ENCODE measurements at regions of chr2 and their contacts with region 1.

Region 1: DNA sequence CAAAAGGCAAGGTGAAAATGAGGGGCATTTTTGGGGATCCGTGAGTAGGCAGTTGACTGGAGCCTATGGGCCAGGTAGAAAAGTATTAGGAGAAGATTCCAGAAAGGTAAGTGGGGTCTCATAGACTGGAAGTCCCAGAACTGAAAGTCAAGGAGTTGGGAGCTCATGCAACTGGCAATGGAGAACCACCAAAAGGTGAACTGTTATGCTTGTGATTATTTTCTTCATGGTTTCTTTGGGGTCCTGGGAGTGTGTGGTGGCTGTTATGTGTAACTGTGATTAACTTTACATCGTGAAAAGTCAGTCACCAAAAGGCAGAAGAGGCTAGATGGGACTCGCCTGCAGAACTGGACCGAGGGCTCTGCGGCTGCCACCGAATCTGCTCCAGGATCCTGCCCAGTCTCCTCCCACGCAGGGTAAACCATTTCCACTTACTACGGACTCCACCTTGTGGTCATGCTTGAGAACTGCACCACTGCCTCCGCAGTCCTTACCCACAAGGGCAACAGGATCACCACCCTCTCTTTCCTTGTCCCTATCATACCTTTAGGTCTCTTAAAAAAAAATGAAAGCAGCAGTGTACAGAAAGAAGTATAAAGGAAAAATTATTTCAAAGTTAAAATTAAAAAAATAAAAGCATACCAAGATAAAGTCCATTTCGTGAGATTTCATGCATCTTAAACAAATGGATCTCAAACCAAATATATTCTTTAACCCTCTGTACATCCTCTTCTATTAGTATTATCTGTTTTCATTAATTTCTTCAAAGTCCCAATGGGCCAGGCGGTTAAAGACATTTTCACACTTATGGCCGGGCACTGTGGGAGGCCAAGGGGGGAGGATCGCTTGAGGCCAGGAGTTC is 15.6 kb upstream of the CEP68 start:
- DNase-seq: peak; percentile 96
- H3K4me3 ChIP-seq: peak overlapping the region in 3 of 4 donors; percentile 23 to 33 (median 30)
- H3K27ac ChIP-seq: no peak overlapping the region
- H3K4me1 ChIP-seq: peaks cover 4 to 6% (median 4%) of the 10 kb centered on the region in 4 donors
- H3K27me3 ChIP-seq: no peaks in the 10 kb centered on the region
- CTCF ChIP-seq: peak in 2 of 3 experiments; percentile 97 to 98
- EP300 ChIP-seq: no peak
- POLR2A ChIP-seq: no peak

Region 2: DNA sequence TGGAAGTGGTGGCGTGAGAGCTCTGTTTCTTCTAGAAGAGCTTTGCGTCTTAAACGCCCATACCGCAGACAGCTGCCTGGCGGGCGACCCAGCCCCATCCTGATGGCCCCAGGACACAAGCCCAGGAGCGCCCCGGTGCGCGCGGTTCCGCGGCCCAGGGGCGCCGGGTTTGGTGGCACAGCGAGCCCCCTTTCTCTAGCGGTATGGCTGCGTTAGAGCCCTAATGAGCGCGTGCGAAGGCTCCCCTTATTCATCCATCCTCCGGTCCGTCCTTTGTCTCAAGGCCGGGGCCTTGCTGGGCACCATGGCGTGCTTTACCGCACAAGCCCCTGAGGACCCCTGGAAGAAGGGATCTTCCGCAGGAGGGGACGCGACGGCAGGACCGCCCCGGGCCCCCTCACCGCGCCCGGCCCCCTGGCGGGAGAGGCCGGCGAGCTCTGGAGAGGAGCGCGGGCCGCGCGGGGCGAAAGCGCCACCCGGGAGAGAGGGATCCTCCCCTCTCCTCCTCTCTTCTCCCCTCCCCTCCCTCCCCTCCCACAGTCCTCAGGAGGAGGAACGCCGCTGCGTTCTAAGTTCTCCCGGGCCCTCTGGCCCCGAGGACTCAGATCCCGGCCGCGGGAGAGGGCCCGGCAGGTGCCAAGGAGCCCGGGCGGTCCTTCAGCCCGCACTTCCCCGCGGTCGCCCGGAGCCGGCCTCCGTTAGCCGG is 52.1 kb before region 1 on chr2:
- intact Hi-C with region 1: loop called (anchors 5 kb)
- DNase-seq: peak; percentile 93
- H3K4me3 ChIP-seq: peak overlapping the region; percentile 66 to 92 (median 85)
- H3K27ac ChIP-seq: peak overlapping the region; percentile 94 to 99 (median 96)
- H3K4me1 ChIP-seq: peaks cover 17 to 46% (median 37%) of the 10 kb centered on the region in 4 donors
- H3K27me3 ChIP-seq: no peaks in the 10 kb centered on the region
- CTCF ChIP-seq: peak; percentile 20 to 53 (median 39)
- EP300 ChIP-seq: no peak
- POLR2A ChIP-seq: peak; percentile 67

Region 3: DNA sequence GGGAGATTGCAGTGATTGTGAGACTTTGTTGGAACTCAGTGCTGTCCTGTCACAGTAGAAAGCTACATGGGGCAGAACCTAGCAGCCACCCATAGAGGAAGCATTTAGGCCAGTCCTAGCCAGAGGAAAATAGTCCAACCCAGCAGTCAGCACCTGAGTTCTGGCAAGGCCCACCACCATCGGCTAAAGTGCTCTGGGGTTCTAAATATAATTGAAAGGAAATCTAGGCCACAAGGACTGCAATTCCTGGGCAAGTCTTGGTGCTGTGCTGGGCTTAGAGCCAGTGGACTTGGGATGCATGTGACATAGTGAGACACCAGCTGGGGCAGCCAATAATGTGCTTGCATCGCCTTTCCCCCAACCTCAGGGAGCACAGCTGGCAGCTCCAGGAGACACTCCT is 158.1 kb after region 1 on chr2:
- intact Hi-C with region 1: no loop called
- DNase-seq: no peak
- H3K4me3 ChIP-seq: no peak overlapping the region
- H3K27ac ChIP-seq: no peak overlapping the region
- H3K4me1 ChIP-seq: no peaks in the 10 kb centered on the region
- H3K27me3 ChIP-seq: no peaks in the 10 kb centered on the region
- CTCF ChIP-seq: no peak
- EP300 ChIP-seq: no peak
- POLR2A ChIP-seq: no peak

Region 4: GRCh38 chr2:65536596-65536995 is 496.0 kb after region 1 on chr2:
- intact Hi-C with region 1: no loop called
- DNase-seq: no peak
- H3K4me3 ChIP-seq: no peak overlapping the region
- H3K27ac ChIP-seq: no peak overlapping the region
- H3K4me1 ChIP-seq: no peaks in the 10 kb centered on the region
- H3K27me3 ChIP-seq: no peaks in the 10 kb centered on the region
- CTCF ChIP-seq: no peak
- EP300 ChIP-seq: no peak
- POLR2A ChIP-seq: no peak

Region 5: DNA sequence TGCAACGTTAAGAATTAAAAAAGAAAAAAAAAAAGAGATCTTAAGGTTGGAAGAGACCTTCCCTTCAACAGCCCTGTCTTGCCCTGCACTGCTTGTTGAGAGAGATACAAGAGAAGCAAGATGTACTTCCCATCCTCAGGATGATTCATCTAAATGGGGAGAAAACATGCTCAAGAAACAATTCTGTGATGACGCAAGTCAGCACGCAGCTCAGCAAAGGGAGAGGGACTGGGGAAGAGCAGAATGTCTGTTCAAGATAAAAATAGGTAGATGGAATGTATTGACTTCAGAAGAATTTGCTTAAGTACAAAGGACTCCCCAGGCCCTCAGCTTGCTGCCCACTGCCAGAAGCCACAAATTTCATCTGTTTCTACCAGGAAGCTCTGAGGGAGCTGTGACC is 590.0 kb after region 1 on chr2:
- intact Hi-C with region 1: no loop called
- DNase-seq: peak; percentile 80
- H3K4me3 ChIP-seq: no peak overlapping the region
- H3K27ac ChIP-seq: no peak overlapping the region
- H3K4me1 ChIP-seq: no peaks in the 10 kb centered on the region
- H3K27me3 ChIP-seq: no peaks in the 10 kb centered on the region
- CTCF ChIP-seq: no peak
- EP300 ChIP-seq: no peak
- POLR2A ChIP-seq: no peak